Endothelial cell of umbilical vein (primary cell): ENCODE measurements at regions of chr11 and their contacts with region 1.

Region 1: GRCh38 chr11:121112498-121113455 is 11.7 kb downstream of the TECTA start:
- DNase-seq: peak; percentile 54
- H3K4me3 ChIP-seq: no peak overlapping the region
- H3K27ac ChIP-seq: no peak overlapping the region
- H3K4me1 ChIP-seq: peaks cover 8% of the 10 kb centered on the region
- H3K27me3 ChIP-seq: peaks cover 0 to 7% of the 10 kb centered on the region in 2 experiments
- CTCF ChIP-seq: peak; percentile 39 to 45
- POLR2A ChIP-seq: no peak

Region 2: GRCh38 chr11:120952461-120953434 is 160.0 kb before region 1 on chr11:
- CTCF ChIA-PET with region 1: no interaction called
- POLR2A ChIA-PET with region 1: no interaction called
- dilution Hi-C with region 1: no loop called
- intact Hi-C with region 1: loop called (anchors 1 kb)
- DNase-seq: peak; percentile 65
- H3K4me3 ChIP-seq: no peak overlapping the region
- H3K27ac ChIP-seq: no peak overlapping the region
- H3K4me1 ChIP-seq: no peaks in the 10 kb centered on the region
- H3K27me3 ChIP-seq: no peaks in the 10 kb centered on the region
- CTCF ChIP-seq: peak; percentile 39 to 77
- POLR2A ChIP-seq: no peak

Region 3: DNA sequence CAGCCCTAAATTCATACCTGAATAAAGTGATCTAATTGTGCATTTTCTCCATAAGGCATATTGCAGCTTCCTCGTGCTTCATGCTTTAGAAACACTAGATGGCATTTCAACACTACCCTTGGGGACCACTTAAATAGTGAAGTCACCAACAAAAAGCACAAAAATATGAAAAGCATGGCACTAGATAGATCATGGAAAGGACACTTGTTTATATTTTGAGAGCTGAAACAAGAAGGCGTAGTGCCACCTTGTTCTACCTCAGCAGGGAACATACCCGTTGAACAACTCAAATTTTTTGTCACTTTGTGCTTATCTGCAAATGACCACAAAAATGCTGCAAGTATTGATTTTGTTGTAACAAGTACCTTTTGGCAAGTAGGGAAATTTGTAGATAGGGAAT is 80.2 kb before region 1 on chr11:
- CTCF ChIA-PET with region 1: no interaction called
- POLR2A ChIA-PET with region 1: no interaction called
- dilution Hi-C with region 1: no loop called
- intact Hi-C with region 1: loop called (anchors 5 kb)
- DNase-seq: no peak
- H3K4me3 ChIP-seq: no peak overlapping the region
- H3K27ac ChIP-seq: no peak overlapping the region
- H3K4me1 ChIP-seq: no peaks in the 10 kb centered on the region
- H3K27me3 ChIP-seq: no peaks in the 10 kb centered on the region
- CTCF ChIP-seq: no peak
- POLR2A ChIP-seq: no peak

Region 4: GRCh38 chr11:121309688-121310087 is 196.9 kb after region 1 on chr11:
- CTCF ChIA-PET with region 1: no interaction called
- POLR2A ChIA-PET with region 1: no interaction called
- dilution Hi-C with region 1: no loop called
- intact Hi-C with region 1: no loop called
- DNase-seq: no peak
- H3K4me3 ChIP-seq: no peak overlapping the region
- H3K27ac ChIP-seq: no peak overlapping the region
- H3K4me1 ChIP-seq: peaks cover 4% of the 10 kb centered on the region
- H3K27me3 ChIP-seq: no peaks in the 10 kb centered on the region
- CTCF ChIP-seq: no peak
- POLR2A ChIP-seq: no peak